ENCODE measurements at regions of chr11 and their contacts with region 1.

Region 1: DNA sequence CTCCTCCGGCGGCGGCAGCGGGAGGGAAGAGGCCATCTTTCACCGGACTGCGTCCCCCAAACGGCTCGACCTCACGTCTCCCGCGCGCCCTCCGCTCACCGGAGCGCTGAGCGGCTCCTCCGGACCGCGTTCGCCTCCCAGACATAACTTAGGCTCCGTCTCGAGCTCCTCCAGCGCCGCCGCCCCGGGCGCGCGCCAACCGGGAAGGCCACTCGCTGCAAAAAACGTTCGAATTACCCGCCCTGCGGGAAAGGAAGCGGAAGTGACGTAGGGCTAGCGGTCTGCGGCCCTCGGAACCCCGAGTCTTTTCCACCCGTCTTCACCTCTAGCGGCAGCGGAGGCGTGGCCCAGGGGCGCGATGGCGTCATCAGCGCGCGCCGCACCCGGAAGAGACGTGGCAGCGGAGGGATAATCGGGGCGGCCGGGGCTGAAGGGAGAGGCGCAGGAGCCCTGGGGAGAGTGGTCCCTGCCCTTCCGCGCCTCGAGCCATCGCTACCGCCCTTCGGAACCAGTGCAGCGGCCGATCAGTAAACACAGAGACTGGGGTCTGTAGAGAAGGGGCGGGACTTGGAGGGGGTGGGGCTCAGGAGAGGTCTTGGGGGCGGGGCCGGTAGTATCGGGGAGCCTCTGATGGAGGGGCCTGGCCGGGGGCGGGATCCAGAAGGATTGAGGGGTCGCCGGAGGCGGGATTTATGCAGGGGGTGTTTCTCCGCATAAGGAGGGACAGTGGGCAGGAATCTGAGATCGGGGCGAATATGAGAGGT is at the starts of genes CDCA5 and ZFPL1:
- DNase-seq: peak; percentile 96
- H3K4me3 Mint-ChIP-seq: peak within 1 kb of the TSS; percentile 98
- H3K27ac Mint-ChIP-seq: peak within 1 kb of the TSS; percentile 97
- H3K4me1 Mint-ChIP-seq: peaks cover 59% of the 10 kb centered on the region
- H3K27me3 Mint-ChIP-seq: no peaks in the 10 kb centered on the region
- total RNA-seq, gene CDCA5: 91.8 and 92.5 TPM in 2 replicates
- total RNA-seq, gene ZFPL1: 31.9 and 34.5 TPM in 2 replicates

Region 2: GRCh38 chr11:64810271-64810890 is 273.6 kb before region 1 on chr11 and contains the start of gene MEN1:
- intact Hi-C with region 1: loop called (anchors 1 kb)
- DNase-seq: peak; percentile 67
- H3K4me3 Mint-ChIP-seq: peak within 1 kb of the TSS; percentile 95
- H3K27ac Mint-ChIP-seq: peak within 1 kb of the TSS; percentile 89
- H3K4me1 Mint-ChIP-seq: peaks cover 22% of the 10 kb centered on the region
- H3K27me3 Mint-ChIP-seq: peaks cover 5% of the 10 kb centered on the region
- total RNA-seq, gene MEN1: 39.6 and 43.8 TPM in 2 replicates

Region 3: GRCh38 chr11:64900263-64900678 is 183.7 kb before region 1 on chr11:
- intact Hi-C with region 1: no loop called
- DNase-seq: peak; percentile 69
- H3K4me3 Mint-ChIP-seq: peak overlapping the region; percentile 66
- H3K27ac Mint-ChIP-seq: peak overlapping the region; percentile 86
- H3K4me1 Mint-ChIP-seq: peaks cover 12% of the 10 kb centered on the region
- H3K27me3 Mint-ChIP-seq: no peaks in the 10 kb centered on the region

Region 4: GRCh38 chr11:64924102-64924851 is 159.7 kb before region 1 on chr11 and contains the start of gene PPP2R5B:
- intact Hi-C with region 1: loop called (anchors 1 kb)
- DNase-seq: peak; percentile 89
- H3K4me3 Mint-ChIP-seq: peak within 1 kb of the TSS; percentile 93
- H3K27ac Mint-ChIP-seq: peak within 1 kb of the TSS; percentile 97
- H3K4me1 Mint-ChIP-seq: peaks cover 20% of the 10 kb centered on the region
- H3K27me3 Mint-ChIP-seq: no peaks in the 10 kb centered on the region
- total RNA-seq, gene PPP2R5B: 7.3 and 14.0 TPM in 2 replicates

Region 5: GRCh38 chr11:65040847-65041621 is 43.0 kb before region 1 on chr11 and contains the start of gene SAC3D1:
- intact Hi-C with region 1: loop called (anchors 1 kb)
- DNase-seq: peak; percentile 90
- H3K4me3 Mint-ChIP-seq: peak within 1 kb of the TSS; percentile 90
- H3K27ac Mint-ChIP-seq: peak within 1 kb of the TSS; percentile 93
- H3K4me1 Mint-ChIP-seq: peaks cover 19% of the 10 kb centered on the region
- H3K27me3 Mint-ChIP-seq: no peaks in the 10 kb centered on the region
- total RNA-seq, gene SAC3D1: 17.4 and 17.7 TPM in 2 replicates

Region 6: DNA sequence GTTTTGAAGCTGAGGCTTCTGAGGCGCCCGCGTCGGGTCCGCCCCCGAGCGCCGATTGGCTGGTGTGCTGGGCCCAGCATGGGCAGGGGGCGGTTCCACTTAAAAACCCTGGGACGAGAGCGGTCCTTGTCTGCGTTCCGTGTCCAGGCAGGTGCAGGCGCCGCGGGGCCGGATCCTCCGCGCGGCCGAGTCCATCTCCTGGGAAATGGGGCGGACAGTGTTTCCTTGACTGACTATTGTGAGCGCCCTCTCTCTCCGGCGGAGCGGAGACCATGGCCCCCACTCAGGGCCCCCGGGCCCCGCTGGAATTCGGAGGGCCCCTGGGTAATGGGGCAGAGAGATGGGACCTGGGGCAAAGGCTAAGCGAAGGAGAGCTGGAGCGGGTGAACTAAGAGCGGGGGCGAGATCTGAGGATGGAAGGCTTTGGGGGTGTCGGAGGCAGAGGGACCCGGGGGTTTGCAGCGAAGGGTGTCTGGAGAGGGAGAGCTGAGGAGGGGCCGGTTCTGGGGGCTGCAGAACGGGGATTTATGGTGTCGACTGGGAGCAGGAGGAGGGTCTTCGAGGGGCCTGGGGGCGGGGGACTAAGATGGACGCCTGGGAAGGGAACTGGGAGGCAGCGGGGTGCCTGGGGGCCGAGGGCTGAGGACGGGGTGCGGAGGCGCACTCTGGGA is 27.9 kb after region 1 on chr11 and contains the start of gene TM7SF2:
- intact Hi-C with region 1: loop called (anchors 1 kb)
- DNase-seq: peak; percentile 91
- H3K4me3 Mint-ChIP-seq: peak within 1 kb of the TSS; percentile 92
- H3K27ac Mint-ChIP-seq: peak within 1 kb of the TSS; percentile 89
- H3K4me1 Mint-ChIP-seq: peaks cover 34% of the 10 kb centered on the region
- H3K27me3 Mint-ChIP-seq: peaks cover 2% of the 10 kb centered on the region
- total RNA-seq, gene TM7SF2: 32.2 and 32.8 TPM in 2 replicates